ENCODE measurements at regions of chr1 and their contacts with region 1.

Region 1: GRCh38 chr1:224696891-224697765 is 81.0 kb downstream of the CNIH3 start:
- DNase-seq: no peak

Region 2: DNA sequence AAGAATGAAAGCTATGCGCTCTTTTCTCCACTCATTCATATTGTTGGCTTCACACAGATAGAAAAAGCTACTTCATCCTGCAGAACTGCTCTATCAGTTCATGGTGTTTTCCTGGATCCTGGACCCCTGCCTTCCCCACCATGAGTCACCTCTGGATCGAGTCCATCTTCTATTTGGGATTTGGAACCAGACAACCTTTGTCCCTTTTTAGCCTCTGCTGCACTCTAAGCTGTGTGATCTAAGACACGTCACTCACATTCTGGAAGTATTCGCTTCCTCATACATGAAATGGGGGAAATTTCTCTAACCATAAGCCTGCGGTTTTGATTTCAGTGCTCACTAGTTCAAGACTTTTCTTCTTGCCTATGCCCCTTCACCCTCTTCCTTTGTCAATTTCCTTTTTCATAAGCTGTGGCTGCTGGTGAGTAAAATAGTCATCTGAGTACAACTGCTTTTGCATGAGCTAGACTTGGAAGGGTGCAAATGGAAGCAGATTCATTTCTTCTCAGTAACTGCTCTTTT is 528.2 kb before region 1 on chr1:
- intact Hi-C with region 1: no loop called
- DNase-seq: no peak

Region 3: GRCh38 chr1:224721000-224721399 is 23.9 kb after region 1 on chr1:
- intact Hi-C with region 1: loop called in 1 of 2 experiments (anchors 1 kb)
- DNase-seq: no peak